ENCODE measurements at regions of chr10 and their contacts with region 1.

Region 1: DNA sequence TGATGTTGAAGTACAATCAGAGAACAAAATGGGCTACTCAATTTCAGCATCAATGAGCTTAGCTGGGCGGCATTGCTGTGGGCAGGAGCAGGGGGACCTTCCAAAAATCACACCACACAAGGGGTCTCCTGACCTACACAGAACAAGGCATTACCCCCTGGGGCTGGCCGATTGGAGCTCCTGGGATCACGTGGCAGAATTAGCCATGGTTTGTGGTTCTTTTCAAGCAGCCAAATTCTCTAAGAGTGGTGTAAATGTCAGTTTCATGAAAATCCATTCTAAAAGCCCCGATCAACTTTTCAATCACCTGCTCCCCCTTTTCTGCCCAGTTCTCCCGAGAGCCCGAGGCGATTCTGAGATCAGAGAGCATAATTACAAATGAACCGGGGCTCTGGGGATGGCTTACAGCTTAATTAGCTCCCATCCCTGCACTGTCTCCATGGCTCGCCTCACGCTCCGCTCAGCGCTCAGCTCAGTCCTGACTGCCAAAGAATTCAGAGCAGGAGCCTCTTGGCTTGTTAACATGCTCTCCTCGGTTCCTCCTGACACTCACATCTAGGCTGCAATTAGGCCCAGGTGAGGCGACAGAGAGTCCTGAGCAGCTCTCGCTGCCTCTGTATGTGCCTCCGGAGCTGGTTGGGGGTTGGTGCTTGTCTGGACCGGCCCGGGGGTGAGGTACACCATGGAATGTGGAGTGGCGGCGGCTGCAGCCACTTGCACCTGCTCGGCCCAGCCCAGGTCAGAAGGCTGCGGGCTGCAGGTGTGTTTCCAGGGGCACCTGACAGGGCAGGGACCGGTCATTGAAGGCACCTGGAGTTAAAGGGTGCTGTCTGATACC is 111.8 kb downstream of the WDR11 start:
- DNase-seq: no peak
- H3K4me3 Mint-ChIP-seq: no peak overlapping the region
- H3K27ac Mint-ChIP-seq: no peak overlapping the region
- H3K4me1 Mint-ChIP-seq: no peaks in the 10 kb centered on the region
- H3K27me3 Mint-ChIP-seq: peaks cover 11% of the 10 kb centered on the region
- CTCF ChIP-seq: no peak

Region 2: GRCh38 chr10:121076776-121077715 is 114.1 kb after region 1 on chr10:
- CTCF ChIA-PET with region 1: interaction called, 3 read pairs
- POLR2A ChIA-PET with region 1: interaction called, 15 read pairs
- intact Hi-C with region 1: no loop called
- DNase-seq: peak; percentile 96
- H3K4me3 Mint-ChIP-seq: peak overlapping the region; percentile 49
- H3K27ac Mint-ChIP-seq: peak overlapping the region; percentile 49
- H3K4me1 Mint-ChIP-seq: peaks cover 41% of the 10 kb centered on the region
- H3K27me3 Mint-ChIP-seq: no peaks in the 10 kb centered on the region
- CTCF ChIP-seq: no peak

Measured in MCF 10A (cell line).